MCF 10A (cell line): ENCODE measurements at regions of chr14 and their contacts with region 1.

Region 1: DNA sequence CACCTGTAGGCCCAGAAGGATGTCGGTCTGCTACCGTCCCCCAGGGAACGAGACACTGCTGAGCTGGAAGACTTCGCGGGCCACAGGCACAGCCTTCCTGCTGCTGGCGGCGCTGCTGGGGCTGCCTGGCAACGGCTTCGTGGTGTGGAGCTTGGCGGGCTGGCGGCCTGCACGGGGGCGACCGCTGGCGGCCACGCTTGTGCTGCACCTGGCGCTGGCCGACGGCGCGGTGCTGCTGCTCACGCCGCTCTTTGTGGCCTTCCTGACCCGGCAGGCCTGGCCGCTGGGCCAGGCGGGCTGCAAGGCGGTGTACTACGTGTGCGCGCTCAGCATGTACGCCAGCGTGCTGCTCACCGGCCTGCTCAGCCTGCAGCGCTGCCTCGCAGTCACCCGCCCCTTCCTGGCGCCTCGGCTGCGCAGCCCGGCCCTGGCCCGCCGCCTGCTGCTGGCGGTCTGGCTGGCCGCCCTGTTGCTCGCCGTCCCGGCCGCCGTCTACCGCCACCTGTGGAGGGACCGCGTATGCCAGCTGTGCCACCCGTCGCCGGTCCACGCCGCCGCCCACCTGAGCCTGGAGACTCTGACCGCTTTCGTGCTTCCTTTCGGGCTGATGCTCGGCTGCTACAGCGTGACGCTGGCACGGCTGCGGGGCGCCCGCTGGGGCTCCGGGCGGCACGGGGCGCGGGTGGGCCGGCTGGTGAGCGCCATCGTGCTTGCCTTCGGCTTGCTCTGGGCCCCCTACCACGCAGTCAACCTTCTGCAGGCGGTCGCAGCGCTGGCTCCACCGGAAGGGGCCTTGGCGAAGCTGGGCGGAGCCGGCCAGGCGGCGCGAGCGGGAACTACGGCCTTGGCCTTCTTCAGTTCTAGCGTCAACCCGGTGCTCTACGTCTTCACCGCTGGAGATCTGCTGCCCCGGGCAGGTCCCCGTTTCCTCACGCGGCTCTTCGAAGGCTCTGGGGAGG is at the start of gene LTB4R:
- DNase-seq: peak; percentile 72
- H3K4me3 Mint-ChIP-seq: peak within 1 kb of the TSS; percentile 69
- H3K27ac Mint-ChIP-seq: no peak within 1 kb of the TSS
- H3K4me1 Mint-ChIP-seq: peaks cover 35% of the 10 kb centered on the region
- H3K27me3 Mint-ChIP-seq: no peaks in the 10 kb centered on the region
- CTCF ChIP-seq: peak; percentile 19
- total RNA-seq, gene LTB4R: 15.8 and 19.9 TPM in 2 replicates

Region 2: GRCh38 chr14:24215495-24216344 is 95.2 kb before region 1 on chr14 and contains the start of gene MDP1:
- CTCF ChIA-PET with region 1: interaction called, 14 read pairs
- POLR2A ChIA-PET with region 1: interaction called, 6 read pairs
- intact Hi-C with region 1: no loop called
- DNase-seq: peak; percentile 87
- H3K4me3 Mint-ChIP-seq: peak within 1 kb of the TSS; percentile 80
- H3K27ac Mint-ChIP-seq: peak within 1 kb of the TSS; percentile 73
- H3K4me1 Mint-ChIP-seq: peaks cover 20% of the 10 kb centered on the region
- H3K27me3 Mint-ChIP-seq: no peaks in the 10 kb centered on the region
- CTCF ChIP-seq: peak; percentile 25
- total RNA-seq, gene MDP1: 11.0 and 20.2 TPM in 2 replicates

Region 3: DNA sequence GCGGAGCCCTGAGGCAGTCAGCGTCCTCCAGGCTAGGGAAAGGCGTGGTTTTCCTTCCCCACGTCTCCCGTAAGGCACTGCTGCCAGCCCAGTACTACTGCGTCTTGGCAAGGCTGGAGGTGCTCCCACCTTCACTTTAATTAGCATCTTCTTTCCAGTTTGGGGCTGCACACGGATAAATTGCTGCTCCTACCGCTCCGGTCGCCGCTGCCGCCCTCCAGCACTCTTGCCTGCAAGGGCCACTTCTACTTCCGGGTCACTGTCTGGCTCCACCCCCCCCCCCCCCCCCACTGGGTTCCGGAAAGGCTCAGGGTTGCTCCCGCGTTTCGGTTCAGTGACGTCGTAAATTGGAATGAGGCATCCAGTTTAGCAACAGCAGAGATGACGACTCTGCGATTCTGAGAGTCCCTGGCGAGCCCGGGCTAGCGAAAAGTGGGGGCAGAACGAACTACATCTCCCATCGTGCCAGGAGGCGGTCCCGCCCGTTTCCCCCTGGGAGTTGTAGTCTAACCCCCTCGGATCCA is 78.7 kb before region 1 on chr14 and contains the start of gene NEDD8:
- CTCF ChIA-PET with region 1: interaction called, 65 read pairs
- POLR2A ChIA-PET with region 1: interaction called, 10 read pairs
- intact Hi-C with region 1: no loop called
- DNase-seq: peak; percentile 98
- H3K4me3 Mint-ChIP-seq: peak within 1 kb of the TSS; percentile 77
- H3K27ac Mint-ChIP-seq: peak within 1 kb of the TSS; percentile 70
- H3K4me1 Mint-ChIP-seq: peaks cover 24% of the 10 kb centered on the region
- H3K27me3 Mint-ChIP-seq: no peaks in the 10 kb centered on the region
- CTCF ChIP-seq: no peak
- total RNA-seq, gene NEDD8: 233 and 243 TPM in 2 replicates

Region 4: DNA sequence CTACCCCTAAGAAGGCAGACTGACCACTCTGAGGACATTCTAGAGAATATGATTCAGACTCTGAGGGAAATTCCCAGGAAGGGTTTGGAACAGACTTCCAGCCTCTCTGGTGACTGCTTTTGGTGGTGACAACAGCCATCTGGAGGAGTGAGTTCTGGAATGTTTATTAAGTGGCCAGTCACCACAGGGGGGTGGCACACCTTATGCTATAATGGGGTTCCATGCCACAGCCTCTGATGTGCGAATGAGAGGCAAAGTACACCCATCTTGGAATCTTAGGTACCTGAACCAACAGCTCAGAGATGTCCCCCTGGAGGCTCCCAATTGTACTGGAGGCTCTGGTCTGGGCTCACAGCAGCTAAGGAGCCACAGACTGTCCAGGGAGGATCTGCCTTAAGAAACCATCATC is 59.0 kb before region 1 on chr14:
- CTCF ChIA-PET with region 1: interaction called, 34 read pairs
- POLR2A ChIA-PET with region 1: no interaction called
- intact Hi-C with region 1: no loop called
- DNase-seq: no peak
- H3K4me3 Mint-ChIP-seq: no peak overlapping the region
- H3K27ac Mint-ChIP-seq: no peak overlapping the region
- H3K4me1 Mint-ChIP-seq: peaks cover 7% of the 10 kb centered on the region
- H3K27me3 Mint-ChIP-seq: no peaks in the 10 kb centered on the region
- CTCF ChIP-seq: no peak

Region 5: DNA sequence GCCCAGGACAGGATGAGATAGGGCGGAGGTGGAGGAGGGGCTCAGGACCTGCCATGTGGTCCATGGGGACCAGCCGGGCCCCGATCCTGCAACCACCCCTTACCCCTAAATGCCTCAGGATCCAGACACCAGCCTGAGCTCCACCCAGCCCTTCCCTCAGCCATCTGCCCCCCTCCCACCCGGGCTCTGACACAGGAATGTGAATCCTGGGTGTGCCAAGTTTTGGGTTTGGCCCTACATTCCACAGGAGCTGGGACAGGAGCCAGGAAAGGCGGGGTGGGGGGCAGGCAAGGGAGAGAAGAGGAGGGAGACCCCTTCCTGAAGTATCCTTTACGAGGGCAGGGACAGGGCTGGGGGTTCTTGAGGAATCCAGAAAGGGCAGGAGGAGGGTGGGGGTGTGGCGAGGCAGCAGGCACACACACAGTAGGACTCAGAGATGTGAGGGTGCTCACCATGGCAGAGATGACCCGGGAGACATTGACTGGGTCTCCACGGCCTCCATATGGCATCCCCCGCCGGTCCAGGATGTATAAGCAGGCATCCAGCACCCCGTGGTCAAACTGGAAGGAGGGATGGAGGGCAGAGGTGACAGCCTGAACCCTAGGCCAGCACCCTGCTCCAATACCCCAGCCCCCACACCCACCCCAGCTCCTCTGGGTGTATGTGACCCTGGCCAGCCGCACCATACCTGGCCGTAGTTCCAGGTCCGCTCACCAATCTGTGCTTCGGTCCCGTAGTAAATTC is 51.5 kb before region 1 on chr14:
- CTCF ChIA-PET with region 1: interaction called, 34 read pairs
- POLR2A ChIA-PET with region 1: interaction called, 3 read pairs
- intact Hi-C with region 1: no loop called
- DNase-seq: peak; percentile 66
- H3K4me3 Mint-ChIP-seq: peak overlapping the region; percentile 57
- H3K27ac Mint-ChIP-seq: peak overlapping the region; percentile 97
- H3K4me1 Mint-ChIP-seq: peaks cover 47% of the 10 kb centered on the region
- H3K27me3 Mint-ChIP-seq: no peaks in the 10 kb centered on the region
- CTCF ChIP-seq: no peak

Region 6: GRCh38 chr14:24289649-24290249 is 21.2 kb before region 1 on chr14:
- CTCF ChIA-PET with region 1: interaction called, 145 read pairs
- POLR2A ChIA-PET with region 1: interaction called, 3 read pairs
- intact Hi-C with region 1: no loop called
- DNase-seq: no peak
- H3K4me3 Mint-ChIP-seq: no peak overlapping the region
- H3K27ac Mint-ChIP-seq: peak overlapping the region; percentile 73
- H3K4me1 Mint-ChIP-seq: peaks cover 13% of the 10 kb centered on the region
- H3K27me3 Mint-ChIP-seq: no peaks in the 10 kb centered on the region
- CTCF ChIP-seq: no peak

Region 7: DNA sequence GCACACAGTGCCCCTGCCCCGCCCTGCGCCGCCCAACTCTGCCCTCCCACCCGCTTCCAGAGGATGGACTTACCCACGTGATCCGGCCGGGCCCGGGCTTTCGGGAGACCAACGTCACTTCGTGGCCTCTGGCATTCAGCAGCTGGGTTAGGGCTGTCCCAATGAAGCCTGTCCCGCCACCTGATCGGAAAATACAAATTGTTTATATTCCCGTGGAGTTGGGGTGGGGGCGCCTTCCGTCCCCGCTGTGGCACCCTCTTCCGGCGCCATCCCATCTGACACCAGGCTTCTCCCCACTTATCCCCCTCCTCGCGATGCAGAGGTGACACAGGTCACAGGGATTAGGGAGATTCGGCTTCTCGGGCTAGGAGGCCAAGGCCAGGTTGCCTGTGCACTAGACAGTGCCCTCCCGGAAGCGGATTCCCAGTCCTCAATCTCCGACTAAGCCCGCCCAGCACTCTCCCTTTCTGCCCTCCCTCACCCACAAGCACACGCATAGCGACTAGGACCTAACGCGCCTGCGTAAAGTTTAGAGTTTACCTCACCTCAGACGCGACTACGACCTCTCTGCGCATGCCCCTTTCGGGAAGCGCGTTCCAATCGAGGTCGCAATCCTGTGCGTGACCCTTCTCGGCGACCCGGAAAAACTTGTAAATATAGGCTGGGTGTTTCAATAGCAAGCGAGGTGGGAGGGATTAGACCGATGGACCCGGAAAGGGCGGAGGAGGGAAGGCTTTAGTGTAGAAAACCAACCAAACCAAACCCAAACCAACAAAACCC is 131.5 kb after region 1 on chr14 and contains the start of gene SDR39U1:
- CTCF ChIA-PET with region 1: interaction called, 135 read pairs
- POLR2A ChIA-PET with region 1: interaction called, 7 read pairs
- intact Hi-C with region 1: no loop called
- DNase-seq: peak; percentile 99
- H3K4me3 Mint-ChIP-seq: peak within 1 kb of the TSS; percentile 78
- H3K27ac Mint-ChIP-seq: peak within 1 kb of the TSS; percentile 100
- H3K4me1 Mint-ChIP-seq: peaks cover 8% of the 10 kb centered on the region
- H3K27me3 Mint-ChIP-seq: no peaks in the 10 kb centered on the region
- CTCF ChIP-seq: no peak
- total RNA-seq, gene SDR39U1: 53.2 and 58.7 TPM in 2 replicates